Naive thymus-derived CD4-positive, alpha-beta T cell (primary cell): ENCODE measurements at regions of chr1 and their contacts with region 1.

Region 1: DNA sequence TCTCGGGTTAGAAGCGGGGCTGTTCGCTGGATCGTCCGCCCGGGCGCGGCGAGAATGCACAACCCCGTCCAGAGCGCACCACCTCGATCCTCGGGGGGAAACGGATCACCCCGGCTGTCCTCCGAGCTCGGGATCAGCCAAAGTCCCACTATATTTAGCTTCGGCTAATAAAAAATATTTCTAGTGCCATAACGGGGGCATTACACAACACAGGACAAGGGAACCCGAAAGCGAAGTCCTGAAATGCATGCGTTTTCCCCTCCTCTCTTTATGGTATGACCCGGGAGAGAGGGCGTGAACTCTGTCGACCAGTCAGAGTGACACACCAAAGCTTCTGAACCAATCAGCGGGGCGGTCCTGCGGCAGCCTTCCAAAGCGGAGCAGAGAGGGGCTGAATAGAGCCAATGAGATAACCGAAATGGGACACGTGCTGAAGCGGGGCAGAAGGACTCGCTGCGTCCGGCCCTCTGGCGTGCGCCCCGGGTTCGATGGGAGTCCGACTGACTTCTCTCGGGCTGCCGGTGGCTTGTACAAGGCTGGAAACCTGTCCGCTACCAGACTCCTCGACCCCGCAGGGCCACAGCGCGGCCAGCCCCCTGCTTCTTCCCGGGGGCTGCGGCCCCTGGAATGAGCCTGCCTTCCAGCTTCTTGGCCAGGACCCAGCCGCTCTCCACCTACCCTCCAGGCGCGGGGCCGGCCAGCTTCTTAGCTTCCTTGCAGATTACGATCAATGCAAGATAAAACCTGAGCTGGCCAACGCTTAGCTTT is at the start of gene ALDH4A1:
- DNase-seq: peak; percentile 73 to 95 (median 93)
- ATAC-seq: peak; percentile 98
- H3K4me3 ChIP-seq: peak within 1 kb of the TSS; percentile 57
- H3K4me3 Mint-ChIP-seq: peak within 1 kb of the TSS; percentile 86 to 99 (median 94)
- H3K27ac ChIP-seq: peak within 1 kb of the TSS; percentile 83
- H3K27ac Mint-ChIP-seq: peak within 1 kb of the TSS; percentile 88 to 98 (median 97)
- H3K4me1 ChIP-seq: peaks cover 3 to 12% of the 10 kb centered on the region in 2 donors
- H3K4me1 Mint-ChIP-seq: peaks cover 22 to 50% (median 41%) of the 10 kb centered on the region in 7 donors
- H3K27me3 ChIP-seq: no peaks in the 10 kb centered on the region
- H3K27me3 Mint-ChIP-seq: no peaks in the 10 kb centered on the region
- total RNA-seq, gene ALDH4A1: 1.3 to 3.2 (median 1.6) TPM

Region 2: GRCh38 chr1:18020021-18020817 is 882.5 kb before region 1 on chr1:
- CTCF ChIA-PET with region 1: no interaction called
- POLR2A ChIA-PET with region 1: no interaction called
- intact Hi-C with region 1: no loop called
- DNase-seq: no peak
- ATAC-seq: no peak
- H3K4me3 ChIP-seq: no peak overlapping the region
- H3K4me3 Mint-ChIP-seq: no peak overlapping the region
- H3K27ac ChIP-seq: no peak overlapping the region
- H3K27ac Mint-ChIP-seq: no peak overlapping the region
- H3K4me1 ChIP-seq: no peaks in the 10 kb centered on the region
- H3K4me1 Mint-ChIP-seq: no peaks in the 10 kb centered on the region
- H3K27me3 ChIP-seq: no peaks in the 10 kb centered on the region
- H3K27me3 Mint-ChIP-seq: peaks cover 0 to 42% (median 21%) of the 10 kb centered on the region in 5 donors

Region 3: GRCh38 chr1:18949686-18950400 is 47.1 kb after region 1 on chr1:
- CTCF ChIA-PET with region 1: interaction called, 14 read pairs
- POLR2A ChIA-PET with region 1: interaction called, 4 read pairs
- intact Hi-C with region 1: loop called (anchors 1 kb)
- DNase-seq: peak in 3 of 9 donors; percentile 19 to 35 (median 32)
- ATAC-seq: no peak
- H3K4me3 ChIP-seq: peak overlapping the region; percentile 50
- H3K4me3 Mint-ChIP-seq: peak overlapping the region; percentile 82 to 94 (median 90)
- H3K27ac ChIP-seq: peak overlapping the region; percentile 98
- H3K27ac Mint-ChIP-seq: peak overlapping the region; percentile 91 to 99 (median 98)
- H3K4me1 ChIP-seq: peaks cover 95 to 99% of the 10 kb centered on the region in 2 donors
- H3K4me1 Mint-ChIP-seq: peaks cover 83 to 98% (median 93%) of the 10 kb centered on the region in 7 donors
- H3K27me3 ChIP-seq: no peaks in the 10 kb centered on the region
- H3K27me3 Mint-ChIP-seq: peaks cover 0 to 2% (median 0%) of the 10 kb centered on the region in 5 donors

Region 4: DNA sequence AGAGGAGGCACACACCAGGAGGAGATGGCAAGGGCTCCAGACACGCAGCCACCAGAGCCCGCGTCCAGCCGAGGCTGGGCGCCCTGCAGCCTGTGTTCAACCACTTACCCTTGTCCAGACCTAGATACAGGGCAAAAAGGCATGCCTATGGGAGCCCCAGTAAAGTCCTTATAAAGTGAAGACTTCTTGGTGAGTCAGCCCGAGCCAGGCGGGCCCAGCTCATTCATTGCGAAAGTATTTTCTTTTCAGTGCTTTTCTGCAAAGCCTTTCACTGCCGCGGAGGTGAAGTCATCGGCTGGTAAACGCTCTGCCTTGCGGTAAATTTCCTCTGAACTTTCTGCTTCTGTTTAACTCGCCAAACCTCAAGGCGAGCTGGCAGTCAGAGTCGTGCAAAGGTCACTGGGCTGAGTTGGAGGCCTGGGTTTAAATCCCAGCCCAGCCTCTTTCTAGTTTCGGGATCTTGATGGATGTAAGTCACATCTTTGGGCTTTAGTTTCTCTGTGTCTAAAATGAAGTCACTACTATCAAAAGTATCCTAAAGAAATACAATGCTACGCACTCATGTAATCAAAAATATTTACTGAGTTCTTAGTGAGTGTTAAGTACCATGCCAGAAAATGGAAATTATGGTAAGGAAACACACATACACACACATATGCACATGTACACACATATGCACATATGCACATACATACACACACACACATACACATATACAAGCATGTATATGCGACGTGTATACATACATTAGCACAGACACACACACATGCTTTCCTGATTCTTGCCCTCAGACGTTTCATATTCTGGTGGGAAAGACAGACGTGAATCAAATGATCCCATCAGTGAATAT is 108.5 kb after region 1 on chr1:
- CTCF ChIA-PET with region 1: interaction called, 5 read pairs
- POLR2A ChIA-PET with region 1: no interaction called
- intact Hi-C with region 1: loop called in 1 of 2 experiments (anchors 5 kb)
- DNase-seq: peak in 8 of 9 donors; percentile 10 to 73 (median 53)
- ATAC-seq: peak; percentile 87
- H3K4me3 ChIP-seq: peak overlapping the region; percentile 19
- H3K4me3 Mint-ChIP-seq: peak overlapping the region in 9 of 10 donors; percentile 34 to 72 (median 59)
- H3K27ac ChIP-seq: peak overlapping the region; percentile 14
- H3K27ac Mint-ChIP-seq: peak overlapping the region in 8 of 9 donors; percentile 40 to 81 (median 72)
- H3K4me1 ChIP-seq: peaks cover 8 to 13% of the 10 kb centered on the region in 2 donors
- H3K4me1 Mint-ChIP-seq: peaks cover 15 to 33% (median 29%) of the 10 kb centered on the region in 7 donors
- H3K27me3 ChIP-seq: no peaks in the 10 kb centered on the region
- H3K27me3 Mint-ChIP-seq: peaks cover 0 to 5% (median 0%) of the 10 kb centered on the region in 5 donors

Region 5: DNA sequence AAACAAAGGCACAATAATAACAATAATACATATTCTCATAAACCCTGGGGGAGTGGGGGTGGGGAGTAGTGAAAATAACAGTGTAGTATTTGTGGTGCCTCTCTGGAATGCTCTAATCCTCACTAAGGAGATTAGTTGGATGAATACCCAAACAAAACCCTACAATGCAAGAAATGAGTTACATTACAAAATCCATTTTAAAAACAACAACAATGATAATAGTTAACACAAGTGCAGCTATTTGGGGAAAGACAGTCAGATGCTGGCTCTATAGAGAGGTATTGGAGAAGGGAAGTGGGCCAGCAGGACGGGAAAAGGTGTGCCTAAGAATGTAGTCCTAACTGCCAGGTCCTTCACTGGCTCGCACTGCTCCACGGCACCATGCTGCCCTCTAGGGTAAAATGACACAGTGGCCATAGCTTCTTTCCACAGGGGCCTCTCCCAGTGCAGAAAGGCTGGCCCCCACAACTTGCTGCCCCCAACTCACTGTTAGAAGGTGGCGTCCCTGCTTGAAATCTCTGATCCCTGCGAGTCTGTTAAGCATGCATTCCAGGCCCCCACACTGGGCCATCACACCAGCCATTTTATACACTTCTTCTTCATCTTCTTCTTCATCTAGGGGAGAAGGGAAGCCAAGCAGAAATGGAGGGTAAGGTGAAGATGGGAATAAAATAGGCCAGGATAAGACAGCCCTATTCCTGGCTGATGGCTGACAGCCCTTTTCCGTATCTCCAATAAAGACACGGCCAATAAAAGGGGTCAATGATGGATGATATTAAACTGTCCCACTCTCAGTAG is 193.5 kb after region 1 on chr1:
- CTCF ChIA-PET with region 1: interaction called, 10 read pairs
- POLR2A ChIA-PET with region 1: interaction called, 6 read pairs
- intact Hi-C with region 1: loop called (anchors 1 kb)
- DNase-seq: peak in 5 of 9 donors; percentile 13 to 28 (median 24)
- ATAC-seq: no peak
- H3K4me3 ChIP-seq: no peak overlapping the region
- H3K4me3 Mint-ChIP-seq: no peak overlapping the region
- H3K27ac ChIP-seq: no peak overlapping the region
- H3K27ac Mint-ChIP-seq: peak overlapping the region in 2 of 9 donors; percentile 1 to 32
- H3K4me1 ChIP-seq: no peaks in the 10 kb centered on the region
- H3K4me1 Mint-ChIP-seq: peaks cover 0 to 7% (median 0%) of the 10 kb centered on the region in 7 donors
- H3K27me3 ChIP-seq: no peaks in the 10 kb centered on the region
- H3K27me3 Mint-ChIP-seq: no peaks in the 10 kb centered on the region

Region 6: DNA sequence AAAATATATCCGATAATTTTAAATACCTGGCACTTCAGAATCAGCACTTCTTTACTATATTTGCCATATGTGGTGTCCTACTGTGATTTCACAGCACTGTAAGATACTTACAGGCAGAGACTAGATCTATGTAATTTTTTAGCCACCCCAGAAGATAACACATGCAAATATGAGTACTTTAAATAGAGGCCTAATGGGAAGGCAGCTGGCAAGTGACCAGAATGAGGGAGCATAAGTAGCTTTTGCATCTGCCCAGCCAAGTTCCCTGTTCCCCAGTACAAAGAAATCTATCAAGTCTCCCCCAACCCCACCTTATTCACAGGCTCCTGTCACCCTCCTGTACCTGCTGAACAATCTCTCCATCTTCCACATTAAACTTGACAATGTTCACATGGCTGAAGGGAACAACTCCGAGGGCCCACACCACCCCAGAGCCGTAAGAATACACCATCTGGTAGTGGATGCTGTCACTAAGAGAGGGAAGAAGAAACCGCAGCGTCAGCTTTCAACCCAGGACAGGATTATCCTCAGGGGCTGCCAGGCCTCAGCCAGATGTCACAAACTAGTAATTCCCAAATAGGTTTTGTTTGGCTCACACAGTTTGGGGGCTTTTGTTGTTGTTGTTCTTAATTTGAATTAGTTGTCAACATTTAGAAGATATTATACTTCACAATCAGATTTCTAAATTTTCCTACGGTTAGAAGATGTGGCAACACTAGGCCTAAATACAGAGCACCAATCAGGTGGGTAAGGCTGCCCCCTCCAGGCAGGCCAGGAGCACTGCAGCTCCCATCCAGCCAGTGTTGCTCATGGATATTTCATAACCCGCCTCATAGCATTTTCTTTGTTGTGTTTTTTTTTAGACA is 338.2 kb after region 1 on chr1:
- CTCF ChIA-PET with region 1: no interaction called
- POLR2A ChIA-PET with region 1: no interaction called
- intact Hi-C with region 1: loop called in 1 of 2 experiments (anchors 5 kb)
- DNase-seq: peak; percentile 36 to 79 (median 68)
- ATAC-seq: peak; percentile 100
- H3K4me3 ChIP-seq: no peak overlapping the region
- H3K4me3 Mint-ChIP-seq: no peak overlapping the region
- H3K27ac ChIP-seq: peak overlapping the region; percentile 36
- H3K27ac Mint-ChIP-seq: peak overlapping the region in 5 of 9 donors; percentile 28 to 62 (median 56)
- H3K4me1 ChIP-seq: no peaks in the 10 kb centered on the region
- H3K4me1 Mint-ChIP-seq: peaks cover 0 to 4% (median 0%) of the 10 kb centered on the region in 7 donors
- H3K27me3 ChIP-seq: no peaks in the 10 kb centered on the region
- H3K27me3 Mint-ChIP-seq: no peaks in the 10 kb centered on the region

Region 7: DNA sequence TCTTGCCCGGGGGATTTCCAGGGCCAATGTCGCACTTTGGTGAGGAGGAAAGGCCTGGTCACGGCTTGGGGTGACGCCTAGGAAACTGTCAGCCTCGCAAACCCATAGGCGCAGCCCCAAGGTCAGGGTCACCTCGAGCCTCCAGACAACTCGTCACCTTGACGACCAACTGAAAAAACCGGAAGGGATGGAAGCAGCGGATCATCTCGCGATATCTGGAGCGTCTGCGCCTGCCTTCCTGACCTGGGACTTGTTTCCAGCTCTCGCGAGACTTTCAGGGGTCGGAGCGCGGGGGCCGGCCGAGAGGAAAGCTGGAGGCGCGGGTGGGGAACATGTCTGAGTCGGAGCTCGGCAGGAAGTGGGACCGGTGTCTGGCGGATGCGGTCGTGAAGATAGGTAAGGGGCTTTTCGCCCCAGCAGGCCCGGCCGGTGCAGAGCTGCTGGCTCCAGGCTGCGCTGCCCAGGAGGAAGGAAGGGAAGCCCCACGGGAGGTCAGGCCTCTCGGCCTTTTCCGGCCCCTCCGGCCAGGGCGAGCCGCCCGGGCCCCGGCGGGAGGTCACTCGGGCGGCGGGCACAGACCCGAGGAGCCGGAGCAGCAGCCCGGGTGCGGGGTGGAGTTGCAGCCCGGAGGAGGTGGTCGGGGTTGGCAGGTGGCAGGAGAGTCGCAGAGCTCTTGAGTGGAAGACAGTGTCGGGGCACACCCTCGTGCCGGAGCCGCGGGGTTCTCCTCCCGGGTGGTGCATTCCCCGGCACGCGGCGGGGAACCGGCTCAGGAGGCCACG is 694.2 kb after region 1 on chr1:
- CTCF ChIA-PET with region 1: no interaction called
- POLR2A ChIA-PET with region 1: no interaction called
- intact Hi-C with region 1: loop called in 1 of 2 experiments (anchors 10 kb)
- DNase-seq: peak; percentile 86 to 98 (median 97)
- ATAC-seq: peak; percentile 86
- H3K4me3 ChIP-seq: peak overlapping the region; percentile 59
- H3K4me3 Mint-ChIP-seq: peak overlapping the region; percentile 79 to 100 (median 98)
- H3K27ac ChIP-seq: peak overlapping the region; percentile 99
- H3K27ac Mint-ChIP-seq: peak overlapping the region; percentile 98 to 100 (median 99)
- H3K4me1 ChIP-seq: peaks cover 34 to 45% of the 10 kb centered on the region in 2 donors
- H3K4me1 Mint-ChIP-seq: peaks cover 29 to 56% (median 47%) of the 10 kb centered on the region in 7 donors
- H3K27me3 ChIP-seq: no peaks in the 10 kb centered on the region
- H3K27me3 Mint-ChIP-seq: peaks cover 0 to 11% (median 0%) of the 10 kb centered on the region in 5 donors